ENCODE measurements at regions of chr11 and their contacts with region 1.

Region 1: DNA sequence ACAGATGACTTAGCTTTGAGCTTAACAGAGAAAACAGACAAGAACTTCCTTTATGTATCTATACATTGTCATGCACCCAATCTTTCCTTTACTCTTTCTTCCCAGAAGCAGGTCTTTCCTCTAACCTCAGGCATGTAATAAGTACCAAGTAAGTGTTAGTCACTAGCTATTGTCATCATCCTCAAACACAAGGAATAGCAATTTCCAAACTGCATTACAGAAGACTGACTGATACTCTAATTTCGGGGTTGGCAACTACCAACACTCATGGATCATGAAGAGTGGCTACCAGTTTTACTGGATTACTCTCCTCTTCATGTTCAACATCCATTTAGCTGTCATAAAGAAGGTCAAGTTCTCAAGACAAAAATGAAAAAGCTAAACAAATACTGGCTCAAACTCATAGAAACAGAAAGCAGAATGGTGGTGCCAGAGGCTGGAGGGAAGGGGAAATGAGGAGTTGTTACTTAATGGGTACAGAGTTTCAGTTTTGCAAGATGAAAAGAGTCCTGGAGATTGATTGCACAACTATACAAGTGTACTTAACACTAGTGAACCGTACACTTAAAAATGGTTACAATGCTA is 111.6 kb downstream of the SIK3 start:
- DNase-seq: peak in 1 of 2 donors; percentile 18
- H3K4me3 ChIP-seq: no peak overlapping the region
- H3K27ac ChIP-seq: peak overlapping the region; percentile 37 to 68 (median 45)
- H3K4me1 ChIP-seq: peaks cover 43 to 58% of the 10 kb centered on the region in 2 donors
- H3K27me3 ChIP-seq: no peaks in the 10 kb centered on the region
- CTCF ChIP-seq: no peak
- POLR2A ChIP-seq: no peak

Region 2: DNA sequence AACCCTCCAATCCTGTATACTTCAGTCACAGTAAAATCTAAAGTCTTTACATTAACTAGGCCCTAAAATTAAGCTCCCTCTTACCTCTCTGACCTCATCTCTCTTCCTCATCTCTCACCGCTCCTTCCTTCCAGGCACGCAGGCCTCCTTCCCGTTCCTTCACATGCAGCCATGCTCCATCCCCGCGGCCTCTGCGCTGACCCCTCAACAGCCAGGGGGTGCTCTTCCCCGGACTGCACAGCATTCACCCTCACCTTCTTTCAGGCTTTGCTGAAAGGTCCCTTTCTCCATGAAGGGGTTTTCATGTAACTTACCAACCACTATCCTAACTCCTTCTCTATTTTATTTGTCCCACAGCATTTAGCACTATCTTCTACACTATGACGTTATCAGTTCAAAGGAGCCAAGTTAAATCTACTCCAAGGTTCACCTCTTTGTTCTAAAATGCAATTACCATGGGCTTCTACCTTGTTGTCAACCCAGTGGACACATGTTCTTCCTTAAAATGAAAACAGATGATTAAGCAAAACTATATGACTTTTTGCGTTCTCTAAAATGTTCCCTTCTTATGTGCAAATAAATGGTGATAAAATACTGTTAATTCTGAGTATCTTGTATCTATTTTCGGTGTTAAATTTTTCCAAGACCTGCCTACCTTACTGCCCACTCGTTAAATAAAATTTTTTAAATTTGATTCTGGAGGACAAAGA is 91.4 kb before region 1 on chr11:
- intact Hi-C with region 1: loop called (anchors 10 kb)
- DNase-seq: no peak
- H3K4me3 ChIP-seq: no peak overlapping the region
- H3K27ac ChIP-seq: peak overlapping the region in 2 of 3 donors; percentile 80 to 85
- H3K4me1 ChIP-seq: peaks cover 13% of the 10 kb centered on the region in 2 donors
- H3K27me3 ChIP-seq: no peaks in the 10 kb centered on the region
- CTCF ChIP-seq: peak in 1 of 6 experiments; percentile 15
- POLR2A ChIP-seq: no peak